HEK293T (cell line): ENCODE measurements at regions of chr3 and their contacts with region 1.

Region 1: DNA sequence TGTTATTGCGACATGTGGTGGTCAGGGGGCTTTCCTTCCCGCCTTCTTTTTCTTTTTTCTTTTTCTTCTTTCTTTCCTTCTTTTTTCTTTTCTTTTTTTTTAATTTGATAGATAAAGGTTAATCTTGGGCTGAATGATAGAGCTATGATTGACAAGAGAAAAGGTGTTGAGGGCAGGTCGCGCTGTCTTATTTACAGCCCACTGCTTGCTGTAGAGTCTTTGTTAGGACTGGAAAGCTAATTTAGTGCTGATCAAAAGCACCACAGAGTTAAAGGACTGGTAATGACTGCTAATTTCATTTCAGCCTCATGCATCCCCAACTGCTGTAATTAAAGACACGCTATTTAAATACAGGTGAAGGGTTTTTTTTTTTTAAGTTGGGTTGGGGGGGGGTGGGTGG is 10.6 kb upstream of the SOX2 start:
- DNase-seq: no peak

Region 2: GRCh38 chr3:181326637-181327223 is 374.4 kb before region 1 on chr3:
- CTCF ChIA-PET with region 1: interaction called, 17 read pairs
- POLR2A ChIA-PET with region 1: no interaction called
- DNase-seq: peak; percentile 34

Region 3: DNA sequence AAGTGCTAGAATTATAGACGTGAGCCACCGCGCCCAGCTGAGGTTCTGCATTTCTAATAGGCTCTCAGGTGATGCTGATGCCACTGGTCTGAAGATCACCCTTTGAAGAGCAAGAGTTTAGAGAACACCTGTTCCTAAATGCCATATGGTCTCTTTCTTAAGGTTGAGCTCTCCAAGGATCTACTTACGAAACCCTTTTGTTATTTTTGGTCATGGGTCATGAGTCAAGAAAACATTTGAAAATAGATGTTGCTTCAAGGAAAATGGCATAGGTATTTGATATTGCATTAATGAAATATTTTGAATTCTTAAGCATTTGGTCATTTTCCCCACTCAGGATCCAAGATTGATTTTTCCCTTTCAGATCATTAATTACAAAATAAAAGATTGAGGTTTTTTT is 64.0 kb before region 1 on chr3:
- CTCF ChIA-PET with region 1: no interaction called
- POLR2A ChIA-PET with region 1: no interaction called
- DNase-seq: no peak